ENCODE measurements at regions of chr9 and their contacts with region 1.

Region 1: DNA sequence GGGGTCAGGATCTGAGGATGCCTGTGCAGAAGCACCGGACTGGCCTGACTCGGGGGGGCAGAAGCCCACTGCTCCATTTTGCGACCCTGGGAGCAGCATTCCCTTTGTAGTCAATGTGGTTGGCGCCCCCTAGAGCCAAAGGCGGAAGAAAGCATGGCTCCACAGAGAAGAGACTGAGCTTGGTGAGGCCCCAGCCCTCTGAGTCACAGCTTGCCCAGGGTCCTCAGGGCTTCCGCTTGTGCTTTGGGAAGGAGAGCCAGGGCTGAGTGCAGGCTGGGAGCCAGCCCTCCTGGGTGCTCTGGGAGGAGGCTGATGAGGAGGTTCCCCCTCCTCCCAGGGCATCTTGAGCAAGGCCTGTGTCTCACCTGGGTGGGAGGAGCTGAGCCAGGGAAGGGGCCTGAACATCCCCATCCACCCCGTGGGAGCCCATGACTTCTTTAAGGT is 5.5 kb upstream of the AQP3 start:
- DNase-seq: peak; percentile 80
- ATAC-seq: peak; percentile 84
- H3K4me3 Mint-ChIP-seq: no peak overlapping the region
- H3K27ac Mint-ChIP-seq: peak overlapping the region; percentile 73
- H3K4me1 Mint-ChIP-seq: peaks cover 60% of the 10 kb centered on the region
- H3K27me3 Mint-ChIP-seq: no peaks in the 10 kb centered on the region
- CTCF ChIP-seq: peak; percentile 88

Region 2: GRCh38 chr9:33404788-33405362 is 48.0 kb before region 1 on chr9:
- CTCF ChIA-PET with region 1: interaction called, 19 read pairs
- POLR2A ChIA-PET with region 1: interaction called, 5 read pairs
- intact Hi-C with region 1: no loop called
- DNase-seq: no peak
- ATAC-seq: no peak
- H3K4me3 Mint-ChIP-seq: no peak overlapping the region
- H3K27ac Mint-ChIP-seq: no peak overlapping the region
- H3K4me1 Mint-ChIP-seq: no peaks in the 10 kb centered on the region
- H3K27me3 Mint-ChIP-seq: no peaks in the 10 kb centered on the region
- CTCF ChIP-seq: no peak

Region 3: GRCh38 chr9:33430942-33431341 is 21.9 kb before region 1 on chr9:
- CTCF ChIA-PET with region 1: interaction called, 11 read pairs
- POLR2A ChIA-PET with region 1: no interaction called
- intact Hi-C with region 1: no loop called
- DNase-seq: no peak
- ATAC-seq: peak; percentile 26
- H3K4me3 Mint-ChIP-seq: no peak overlapping the region
- H3K27ac Mint-ChIP-seq: no peak overlapping the region
- H3K4me1 Mint-ChIP-seq: peaks cover 3% of the 10 kb centered on the region
- H3K27me3 Mint-ChIP-seq: no peaks in the 10 kb centered on the region
- CTCF ChIP-seq: no peak

Region 4: GRCh38 chr9:33466565-33467495 is 14.0 kb after region 1 on chr9:
- CTCF ChIA-PET with region 1: interaction called, 83 read pairs
- POLR2A ChIA-PET with region 1: interaction called, 8 read pairs
- intact Hi-C with region 1: no loop called
- DNase-seq: peak; percentile 82
- ATAC-seq: peak; percentile 91
- H3K4me3 Mint-ChIP-seq: no peak overlapping the region
- H3K27ac Mint-ChIP-seq: no peak overlapping the region
- H3K4me1 Mint-ChIP-seq: peaks cover 10% of the 10 kb centered on the region
- H3K27me3 Mint-ChIP-seq: no peaks in the 10 kb centered on the region
- CTCF ChIP-seq: peak; percentile 97

Region 5: GRCh38 chr9:33473643-33474352 is 20.9 kb after region 1 on chr9 and contains the start of gene NOL6:
- CTCF ChIA-PET with region 1: interaction called, 65 read pairs
- POLR2A ChIA-PET with region 1: interaction called, 4 read pairs
- intact Hi-C with region 1: no loop called
- DNase-seq: peak; percentile 99
- ATAC-seq: peak; percentile 100
- H3K4me3 Mint-ChIP-seq: peak within 1 kb of the TSS; percentile 89
- H3K27ac Mint-ChIP-seq: peak within 1 kb of the TSS; percentile 94
- H3K4me1 Mint-ChIP-seq: peaks cover 23% of the 10 kb centered on the region
- H3K27me3 Mint-ChIP-seq: no peaks in the 10 kb centered on the region
- CTCF ChIP-seq: no peak
- total RNA-seq, gene NOL6: 45.5 to 45.9 TPM

Region 6: GRCh38 chr9:33480087-33480486 is 27.2 kb after region 1 on chr9:
- CTCF ChIA-PET with region 1: interaction called, 65 read pairs
- POLR2A ChIA-PET with region 1: no interaction called
- intact Hi-C with region 1: no loop called
- DNase-seq: no peak
- ATAC-seq: no peak
- H3K4me3 Mint-ChIP-seq: no peak overlapping the region
- H3K27ac Mint-ChIP-seq: no peak overlapping the region
- H3K4me1 Mint-ChIP-seq: no peaks in the 10 kb centered on the region
- H3K27me3 Mint-ChIP-seq: no peaks in the 10 kb centered on the region
- CTCF ChIP-seq: no peak

Region 7: GRCh38 chr9:33964086-33964768 is 511.4 kb after region 1 on chr9:
- CTCF ChIA-PET with region 1: no interaction called
- POLR2A ChIA-PET with region 1: no interaction called
- intact Hi-C with region 1: no loop called
- DNase-seq: no peak
- ATAC-seq: no peak
- H3K4me3 Mint-ChIP-seq: no peak overlapping the region
- H3K27ac Mint-ChIP-seq: no peak overlapping the region
- H3K4me1 Mint-ChIP-seq: peaks cover 7% of the 10 kb centered on the region
- H3K27me3 Mint-ChIP-seq: no peaks in the 10 kb centered on the region
- CTCF ChIP-seq: no peak